H1 (cell line): ENCODE measurements at regions of chrX and their contacts with region 1.

Region 1: DNA sequence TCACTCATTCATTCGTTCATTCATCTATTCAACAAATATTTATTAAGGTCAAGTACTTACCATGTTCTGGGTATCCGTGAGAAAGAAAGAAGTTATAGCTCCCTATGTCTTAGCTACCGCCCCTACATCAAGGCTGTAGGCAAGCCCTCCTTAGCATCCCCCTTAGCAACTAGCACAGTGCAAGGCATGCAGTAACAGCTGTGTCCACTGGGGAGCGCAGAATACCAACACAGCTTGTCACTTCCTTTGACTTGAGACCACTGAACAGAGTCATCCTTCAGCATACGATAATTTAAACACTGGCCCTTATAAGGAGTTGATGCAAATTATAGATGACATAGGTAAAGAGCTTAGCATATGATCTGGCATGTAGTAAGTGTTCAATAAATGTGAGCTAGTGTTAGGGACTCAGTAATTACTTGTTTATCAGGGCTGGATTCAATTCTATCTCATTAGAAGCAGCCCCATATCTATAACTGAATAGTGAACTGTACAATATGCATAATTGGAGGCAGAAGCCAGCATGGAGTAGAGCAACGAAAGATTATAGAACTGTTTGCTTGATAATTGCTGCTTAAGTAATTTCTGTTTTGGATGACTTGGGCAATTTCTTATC is 8.7 kb downstream of the KIAA1210 start:
- DNase-seq: peak; percentile 9 to 59
- H3K4me3 ChIP-seq: no peak overlapping the region
- H3K27ac ChIP-seq: no peak overlapping the region
- H3K4me1 ChIP-seq: no peaks in the 10 kb centered on the region
- H3K27me3 ChIP-seq: no peaks in the 10 kb centered on the region
- CTCF ChIP-seq: peak; percentile 59 to 86 (median 64)
- EP300 ChIP-seq: no peak
- POLR2A ChIP-seq: no peak
- RAD21 ChIP-seq: peak; percentile 69 to 75

Region 2: DNA sequence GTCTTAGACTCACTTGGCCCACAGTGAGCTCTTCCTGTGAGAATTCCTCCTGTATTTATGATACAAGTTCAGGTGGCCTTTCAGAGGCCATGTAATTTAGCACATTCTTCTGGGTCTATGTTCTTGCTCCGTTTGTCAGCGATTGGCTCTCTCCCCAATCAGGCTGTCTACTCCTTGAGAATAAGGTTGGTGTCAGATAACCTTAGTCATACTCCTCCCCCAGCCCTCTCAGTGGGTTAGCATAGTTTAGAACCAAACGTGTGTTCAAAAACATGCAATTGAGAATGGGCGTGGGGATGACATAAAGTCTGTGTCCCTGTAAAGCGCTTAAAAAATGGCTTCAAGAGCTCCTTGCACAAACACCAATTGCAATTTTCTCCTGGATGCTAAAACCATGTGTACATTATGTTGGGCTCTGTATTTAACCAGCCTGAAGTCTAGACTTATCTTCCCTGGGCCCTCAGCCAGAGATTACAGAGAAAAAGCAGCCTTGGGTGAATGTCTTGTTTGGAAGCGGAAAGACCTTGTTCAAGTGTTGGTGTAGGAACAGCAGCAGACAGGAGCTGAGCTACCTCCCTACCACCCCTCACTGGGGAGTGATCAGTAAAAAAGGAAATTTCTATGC is 56.0 kb before region 1 on chrX:
- CTCF ChIA-PET with region 1: no interaction called
- POLR2A ChIA-PET with region 1: no interaction called
- DNase-seq: no peak
- H3K4me3 ChIP-seq: no peak overlapping the region
- H3K27ac ChIP-seq: no peak overlapping the region
- H3K4me1 ChIP-seq: peaks cover 0 to 3% (median 0%) of the 10 kb centered on the region in 4 experiments; a peak in 2 of 7 replicates
- H3K27me3 ChIP-seq: no peaks in the 10 kb centered on the region
- CTCF ChIP-seq: no peak
- EP300 ChIP-seq: no peak
- POLR2A ChIP-seq: no peak
- RAD21 ChIP-seq: no peak

Region 3: GRCh38 chrX:119130911-119131310 is 12.0 kb after region 1 on chrX:
- CTCF ChIA-PET with region 1: interaction called, 37 read pairs
- POLR2A ChIA-PET with region 1: no interaction called
- DNase-seq: no peak
- H3K4me3 ChIP-seq: no peak overlapping the region
- H3K27ac ChIP-seq: no peak overlapping the region
- H3K4me1 ChIP-seq: no peaks in the 10 kb centered on the region
- H3K27me3 ChIP-seq: no peaks in the 10 kb centered on the region
- CTCF ChIP-seq: no peak
- EP300 ChIP-seq: no peak
- POLR2A ChIP-seq: no peak
- RAD21 ChIP-seq: no peak

Region 4: GRCh38 chrX:119158226-119158625 is 39.3 kb after region 1 on chrX:
- CTCF ChIA-PET with region 1: no interaction called
- POLR2A ChIA-PET with region 1: no interaction called
- DNase-seq: no peak
- H3K4me3 ChIP-seq: no peak overlapping the region
- H3K27ac ChIP-seq: no peak overlapping the region
- H3K4me1 ChIP-seq: no peaks in the 10 kb centered on the region
- H3K27me3 ChIP-seq: no peaks in the 10 kb centered on the region
- CTCF ChIP-seq: no peak
- EP300 ChIP-seq: no peak
- POLR2A ChIP-seq: no peak
- RAD21 ChIP-seq: no peak

Region 5: GRCh38 chrX:119194621-119195020 is 75.7 kb after region 1 on chrX:
- CTCF ChIA-PET with region 1: interaction called, 38 read pairs
- POLR2A ChIA-PET with region 1: no interaction called
- DNase-seq: no peak
- H3K4me3 ChIP-seq: no peak overlapping the region
- H3K27ac ChIP-seq: no peak overlapping the region
- H3K4me1 ChIP-seq: no peaks in the 10 kb centered on the region
- H3K27me3 ChIP-seq: no peaks in the 10 kb centered on the region
- CTCF ChIP-seq: peak in 2 of 3 experiments; percentile 34 to 47; a peak in 2 of 4 replicates
- EP300 ChIP-seq: no peak
- POLR2A ChIP-seq: no peak
- RAD21 ChIP-seq: peak; percentile 52 to 61

Region 6: GRCh38 chrX:119211649-119212014 is 92.7 kb after region 1 on chrX:
- CTCF ChIA-PET with region 1: interaction called, 10 read pairs
- POLR2A ChIA-PET with region 1: no interaction called
- DNase-seq: no peak
- H3K4me3 ChIP-seq: no peak overlapping the region
- H3K27ac ChIP-seq: no peak overlapping the region
- H3K4me1 ChIP-seq: no peaks in the 10 kb centered on the region
- H3K27me3 ChIP-seq: no peaks in the 10 kb centered on the region
- CTCF ChIP-seq: no peak
- EP300 ChIP-seq: no peak
- POLR2A ChIP-seq: no peak
- RAD21 ChIP-seq: no peak

Region 7: GRCh38 chrX:119223783-119224182 is 104.9 kb after region 1 on chrX:
- CTCF ChIA-PET with region 1: no interaction called
- POLR2A ChIA-PET with region 1: no interaction called
- DNase-seq: no peak
- H3K4me3 ChIP-seq: no peak overlapping the region
- H3K27ac ChIP-seq: no peak overlapping the region
- H3K4me1 ChIP-seq: no peaks in the 10 kb centered on the region
- H3K27me3 ChIP-seq: no peaks in the 10 kb centered on the region
- CTCF ChIP-seq: no peak
- EP300 ChIP-seq: no peak
- POLR2A ChIP-seq: no peak
- RAD21 ChIP-seq: no peak